ENCODE measurements at regions of chr10 and their contacts with region 1.

Region 1: GRCh38 chr10:22849077-22849805 is 78.6 kb upstream of the ARMC3 start:
- DNase-seq: peak; percentile 82 to 99 (median 92)

Region 2: DNA sequence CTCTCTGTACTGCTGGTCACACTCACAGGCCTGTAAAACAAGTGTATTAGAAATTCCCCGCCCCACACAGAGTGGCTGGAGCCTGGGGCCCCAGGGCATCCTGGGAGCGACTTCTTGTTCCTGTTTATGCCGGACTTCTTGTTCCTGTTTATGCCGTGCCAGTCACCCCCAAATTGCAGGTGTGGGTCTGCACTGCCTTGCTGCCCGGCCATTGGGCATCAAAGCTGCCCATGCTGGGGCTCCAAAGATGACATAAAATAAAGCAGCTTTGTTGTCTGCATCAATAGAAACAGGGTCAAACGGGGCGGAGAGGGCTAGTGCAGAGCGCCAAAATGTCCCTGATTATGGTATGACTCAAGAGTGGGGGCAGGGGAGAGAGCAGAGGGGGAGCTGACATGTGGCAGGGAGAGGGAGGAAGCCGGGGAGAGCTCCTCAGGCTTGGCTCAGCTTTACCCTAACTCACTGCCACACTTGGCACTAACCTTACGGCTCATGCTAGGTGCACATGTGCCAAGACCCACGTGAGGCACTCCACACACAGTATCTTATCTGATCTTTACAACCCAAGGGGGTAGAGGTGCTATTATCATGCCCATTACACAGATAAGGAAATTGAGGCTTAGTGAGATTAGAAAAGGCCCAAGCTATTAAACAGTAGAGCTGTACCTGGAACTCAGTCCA is 233.3 kb before region 1 on chr10:
- intact Hi-C with region 1: loop called (anchors 10 kb)
- DNase-seq: peak; percentile 65 to 98 (median 87)

Region 3: DNA sequence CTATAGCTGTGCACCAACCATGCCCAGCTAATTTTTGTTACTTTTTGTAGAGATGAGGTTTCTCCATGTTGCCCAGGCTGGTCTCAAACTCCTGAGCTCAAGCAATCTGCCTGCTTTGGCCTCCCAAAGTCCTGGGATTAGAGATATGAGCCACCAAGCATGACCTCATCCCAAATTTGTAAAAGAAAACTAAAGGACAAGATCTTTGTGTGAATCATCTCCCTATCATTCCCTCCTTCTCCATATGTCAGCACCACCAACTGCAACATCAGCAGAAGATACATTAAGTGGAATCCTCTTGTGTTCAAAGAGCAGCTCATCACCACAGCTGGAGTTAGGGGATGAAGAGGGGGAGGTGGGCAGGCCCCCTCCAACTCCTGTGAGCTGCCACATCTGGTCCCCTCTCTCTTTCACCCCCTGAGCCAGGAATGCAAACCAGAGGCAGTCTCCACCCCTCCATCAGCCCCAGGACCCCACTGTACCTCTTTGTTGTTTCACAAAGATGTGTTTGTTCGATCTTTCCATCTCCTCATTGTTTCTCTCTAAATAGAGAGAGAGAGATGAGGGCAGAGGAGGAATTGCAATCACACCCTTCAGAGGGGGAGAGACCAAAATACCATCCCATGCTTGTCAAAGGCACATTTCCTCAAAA is 87.5 kb before region 1 on chr10:
- intact Hi-C with region 1: loop called (anchors 5 kb)
- DNase-seq: peak; percentile 37 to 94 (median 59)

Measured in posterior cingulate gyrus (tissue), 11 donors.